ENCODE measurements at regions of chr3 and their contacts with region 1.

Region 1: GRCh38 chr3:50611464-50612233 is at the start of gene CISH:
- DNase-seq: peak; percentile 86 to 98 (median 89)
- ATAC-seq: peak; percentile 77
- H3K4me3 ChIP-seq: peak within 1 kb of the TSS; percentile 93
- H3K4me3 Mint-ChIP-seq: peak within 1 kb of the TSS; percentile 83 to 98 (median 92)
- H3K27ac ChIP-seq: peak within 1 kb of the TSS; percentile 93
- H3K27ac Mint-ChIP-seq: peak within 1 kb of the TSS; percentile 89 to 96 (median 94)
- H3K4me1 ChIP-seq: peaks cover 55 to 56% of the 10 kb centered on the region in 2 donors
- H3K4me1 Mint-ChIP-seq: peaks cover 53 to 80% (median 64%) of the 10 kb centered on the region in 7 donors
- H3K27me3 ChIP-seq: no peaks in the 10 kb centered on the region
- H3K27me3 Mint-ChIP-seq: peaks cover 0 to 2% (median 0%) of the 10 kb centered on the region in 5 donors
- total RNA-seq, gene CISH: 10.9 to 486 (median 28.5) TPM

Region 2: DNA sequence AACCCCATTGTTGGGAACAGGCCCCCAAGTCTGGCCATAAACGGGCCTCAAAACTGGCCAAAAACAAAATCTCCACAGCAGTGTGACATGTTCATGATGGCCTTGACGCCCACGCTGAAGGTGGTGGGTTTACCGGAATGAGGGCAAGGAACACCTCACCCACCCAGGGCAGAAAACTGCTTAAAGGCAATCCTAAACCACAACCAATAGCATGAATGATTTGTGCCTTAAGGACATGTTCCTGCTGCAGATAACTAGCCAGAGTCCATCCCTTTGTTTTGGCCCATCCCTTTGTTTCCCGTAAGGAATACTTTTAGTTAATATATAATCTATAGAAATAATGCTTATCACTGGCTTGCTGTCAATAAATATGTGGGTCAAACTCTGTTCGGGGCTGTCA is 1392.5 kb before region 1 on chr3:
- CTCF ChIA-PET with region 1: no interaction called
- POLR2A ChIA-PET with region 1: no interaction called
- intact Hi-C with region 1: no loop called
- DNase-seq: no peak
- ATAC-seq: no peak
- H3K4me3 ChIP-seq: no peak overlapping the region
- H3K4me3 Mint-ChIP-seq: no peak overlapping the region
- H3K27ac ChIP-seq: no peak overlapping the region
- H3K27ac Mint-ChIP-seq: no peak overlapping the region
- H3K4me1 ChIP-seq: no peaks in the 10 kb centered on the region
- H3K4me1 Mint-ChIP-seq: peaks cover 0 to 3% (median 0%) of the 10 kb centered on the region in 7 donors
- H3K27me3 ChIP-seq: no peaks in the 10 kb centered on the region
- H3K27me3 Mint-ChIP-seq: peaks cover 0 to 13% (median 1%) of the 10 kb centered on the region in 5 donors

Region 3: GRCh38 chr3:50245831-50246516 is 365.7 kb before region 1 on chr3:
- CTCF ChIA-PET with region 1: no interaction called
- POLR2A ChIA-PET with region 1: no interaction called
- intact Hi-C with region 1: no loop called
- DNase-seq: peak; percentile 88 to 99 (median 94)
- ATAC-seq: peak; percentile 90
- H3K4me3 ChIP-seq: peak overlapping the region; percentile 52
- H3K4me3 Mint-ChIP-seq: peak overlapping the region; percentile 77 to 89 (median 82)
- H3K27ac ChIP-seq: peak overlapping the region; percentile 88
- H3K27ac Mint-ChIP-seq: peak overlapping the region; percentile 80 to 96 (median 95)
- H3K4me1 ChIP-seq: peaks cover 61 to 87% of the 10 kb centered on the region in 2 donors
- H3K4me1 Mint-ChIP-seq: peaks cover 57 to 90% (median 74%) of the 10 kb centered on the region in 7 donors
- H3K27me3 ChIP-seq: no peaks in the 10 kb centered on the region
- H3K27me3 Mint-ChIP-seq: no peaks in the 10 kb centered on the region

Region 4: GRCh38 chr3:50350527-50351322 is 260.9 kb before region 1 on chr3 and contains the starts of genes CYB561D2 and NPRL2:
- CTCF ChIA-PET with region 1: no interaction called
- POLR2A ChIA-PET with region 1: interaction called, 3 read pairs
- intact Hi-C with region 1: loop called (anchors 2 kb)
- DNase-seq: peak; percentile 97 to 100 (median 99)
- ATAC-seq: peak; percentile 95
- H3K4me3 ChIP-seq: peak within 1 kb of the TSS; percentile 90
- H3K4me3 Mint-ChIP-seq: peak within 1 kb of the TSS; percentile 86 to 99 (median 96)
- H3K27ac ChIP-seq: peak within 1 kb of the TSS; percentile 93
- H3K27ac Mint-ChIP-seq: peak within 1 kb of the TSS; percentile 96 to 100 (median 99)
- H3K4me1 ChIP-seq: peaks cover 26 to 32% of the 10 kb centered on the region in 2 donors
- H3K4me1 Mint-ChIP-seq: peaks cover 24 to 78% (median 59%) of the 10 kb centered on the region in 7 donors
- H3K27me3 ChIP-seq: no peaks in the 10 kb centered on the region
- H3K27me3 Mint-ChIP-seq: no peaks in the 10 kb centered on the region
- total RNA-seq, gene CYB561D2: 23.3 to 42.6 (median 32.8) TPM
- total RNA-seq, gene NPRL2: 35.3 to 48.9 (median 47.7) TPM

Region 5: GRCh38 chr3:50474717-50475116 is 136.9 kb before region 1 on chr3:
- CTCF ChIA-PET with region 1: no interaction called
- POLR2A ChIA-PET with region 1: no interaction called
- intact Hi-C with region 1: no loop called
- DNase-seq: no peak
- ATAC-seq: no peak
- H3K4me3 ChIP-seq: no peak overlapping the region
- H3K4me3 Mint-ChIP-seq: no peak overlapping the region
- H3K27ac ChIP-seq: no peak overlapping the region
- H3K27ac Mint-ChIP-seq: no peak overlapping the region
- H3K4me1 ChIP-seq: peaks cover 0 to 22% of the 10 kb centered on the region in 2 donors
- H3K4me1 Mint-ChIP-seq: peaks cover 0 to 8% (median 0%) of the 10 kb centered on the region in 7 donors
- H3K27me3 ChIP-seq: no peaks in the 10 kb centered on the region
- H3K27me3 Mint-ChIP-seq: no peaks in the 10 kb centered on the region

Region 6: GRCh38 chr3:50519471-50520089 is 92.1 kb before region 1 on chr3:
- CTCF ChIA-PET with region 1: interaction called, 7 read pairs
- POLR2A ChIA-PET with region 1: no interaction called
- intact Hi-C with region 1: loop called in 1 of 2 experiments (anchors 1 kb)
- DNase-seq: peak; percentile 27 to 78 (median 60)
- ATAC-seq: peak; percentile 79
- H3K4me3 ChIP-seq: no peak overlapping the region
- H3K4me3 Mint-ChIP-seq: no peak overlapping the region
- H3K27ac ChIP-seq: no peak overlapping the region
- H3K27ac Mint-ChIP-seq: no peak overlapping the region
- H3K4me1 ChIP-seq: peaks cover 0 to 3% of the 10 kb centered on the region in 2 donors
- H3K4me1 Mint-ChIP-seq: peaks cover 5 to 16% (median 12%) of the 10 kb centered on the region in 7 donors
- H3K27me3 ChIP-seq: no peaks in the 10 kb centered on the region
- H3K27me3 Mint-ChIP-seq: peaks cover 0 to 42% (median 4%) of the 10 kb centered on the region in 5 donors

Region 7: GRCh38 chr3:50652709-50653108 is 41.1 kb after region 1 on chr3:
- CTCF ChIA-PET with region 1: interaction called, 175 read pairs
- POLR2A ChIA-PET with region 1: interaction called, 34 read pairs
- intact Hi-C with region 1: loop called (anchors 1 kb)
- DNase-seq: peak; percentile 15 to 58 (median 39)
- ATAC-seq: peak; percentile 55
- H3K4me3 ChIP-seq: no peak overlapping the region
- H3K4me3 Mint-ChIP-seq: no peak overlapping the region
- H3K27ac ChIP-seq: no peak overlapping the region
- H3K27ac Mint-ChIP-seq: peak overlapping the region in 7 of 9 donors; percentile 7 to 70 (median 54)
- H3K4me1 ChIP-seq: no peaks in the 10 kb centered on the region
- H3K4me1 Mint-ChIP-seq: peaks cover 5 to 35% (median 8%) of the 10 kb centered on the region in 7 donors
- H3K27me3 ChIP-seq: no peaks in the 10 kb centered on the region
- H3K27me3 Mint-ChIP-seq: no peaks in the 10 kb centered on the region

Region 8: GRCh38 chr3:51275111-51275805 is 663.6 kb after region 1 on chr3:
- CTCF ChIA-PET with region 1: interaction called, 7 read pairs
- POLR2A ChIA-PET with region 1: no interaction called
- intact Hi-C with region 1: loop called in 1 of 2 experiments (anchors 1 kb)
- DNase-seq: no peak
- ATAC-seq: no peak
- H3K4me3 ChIP-seq: no peak overlapping the region
- H3K4me3 Mint-ChIP-seq: peak overlapping the region in 3 of 10 donors; percentile 35 to 61 (median 50)
- H3K27ac ChIP-seq: peak overlapping the region; percentile 6
- H3K27ac Mint-ChIP-seq: peak overlapping the region in 8 of 9 donors; percentile 19 to 87 (median 74)
- H3K4me1 ChIP-seq: peaks cover 6 to 27% of the 10 kb centered on the region in 2 donors
- H3K4me1 Mint-ChIP-seq: peaks cover 10 to 53% (median 40%) of the 10 kb centered on the region in 7 donors
- H3K27me3 ChIP-seq: no peaks in the 10 kb centered on the region
- H3K27me3 Mint-ChIP-seq: no peaks in the 10 kb centered on the region

Region 9: DNA sequence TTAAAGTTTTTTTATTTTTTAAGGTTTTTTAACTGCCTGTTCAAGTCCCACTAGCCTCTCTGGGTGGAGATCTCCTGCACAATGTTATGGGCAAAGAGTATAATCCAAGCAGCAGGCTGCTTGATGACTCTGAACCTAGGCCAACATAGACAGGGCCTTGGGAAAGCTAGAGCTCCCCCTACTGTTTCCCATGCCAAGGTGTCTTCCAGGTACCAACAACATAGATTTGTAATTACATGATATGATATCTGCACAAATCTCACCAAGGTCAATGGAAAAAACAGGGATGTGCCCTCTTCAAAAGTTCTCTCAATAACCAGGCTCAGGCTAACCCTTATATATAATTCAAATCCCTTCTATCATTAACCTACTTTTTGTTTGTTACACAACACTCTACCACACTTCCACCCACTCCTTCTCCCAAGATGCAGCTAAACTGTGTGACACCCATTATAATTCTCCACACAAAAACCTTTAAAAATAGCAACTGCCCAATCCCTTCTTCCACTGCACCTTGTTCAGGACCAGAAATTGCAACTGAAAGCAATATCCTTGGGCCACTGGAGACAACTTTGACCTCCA is 823.2 kb after region 1 on chr3:
- CTCF ChIA-PET with region 1: interaction called, 7 read pairs
- POLR2A ChIA-PET with region 1: no interaction called
- intact Hi-C with region 1: loop called in 1 of 2 experiments (anchors 1 kb)
- DNase-seq: peak in 8 of 9 donors; percentile 26 to 64 (median 52)
- ATAC-seq: peak; percentile 90
- H3K4me3 ChIP-seq: no peak overlapping the region
- H3K4me3 Mint-ChIP-seq: no peak overlapping the region
- H3K27ac ChIP-seq: no peak overlapping the region
- H3K27ac Mint-ChIP-seq: peak overlapping the region in 6 of 9 donors; percentile 16 to 59 (median 34)
- H3K4me1 ChIP-seq: no peaks in the 10 kb centered on the region
- H3K4me1 Mint-ChIP-seq: peaks cover 5 to 13% (median 10%) of the 10 kb centered on the region in 7 donors
- H3K27me3 ChIP-seq: no peaks in the 10 kb centered on the region
- H3K27me3 Mint-ChIP-seq: no peaks in the 10 kb centered on the region

Region 10: GRCh38 chr3:52154117-52155094 is 1542.8 kb after region 1 on chr3 and contains the start of gene POC1A:
- CTCF ChIA-PET with region 1: no interaction called
- POLR2A ChIA-PET with region 1: no interaction called
- intact Hi-C with region 1: loop called in 1 of 2 experiments (anchors 10 kb)
- DNase-seq: peak; percentile 73 to 90 (median 82)
- ATAC-seq: peak; percentile 92
- H3K4me3 ChIP-seq: peak within 1 kb of the TSS; percentile 98
- H3K4me3 Mint-ChIP-seq: peak within 1 kb of the TSS; percentile 88 to 98 (median 96)
- H3K27ac ChIP-seq: peak within 1 kb of the TSS; percentile 85
- H3K27ac Mint-ChIP-seq: peak within 1 kb of the TSS; percentile 87 to 98 (median 94)
- H3K4me1 ChIP-seq: peaks cover 4 to 6% of the 10 kb centered on the region in 2 donors
- H3K4me1 Mint-ChIP-seq: peaks cover 5 to 22% (median 6%) of the 10 kb centered on the region in 7 donors
- H3K27me3 ChIP-seq: no peaks in the 10 kb centered on the region
- H3K27me3 Mint-ChIP-seq: peaks cover 0 to 1% (median 0%) of the 10 kb centered on the region in 5 donors
- total RNA-seq, gene POC1A: 0.58 to 19.7 (median 1.2) TPM

Measured in naive thymus-derived CD4-positive, alpha-beta T cell (primary cell).